Right cardiac atrium (tissue), 5 donors: ENCODE measurements at regions of chr18 and their contacts with region 1.

Region 1: GRCh38 chr18:53698907-53699306 is 525.6 kb downstream of the MBD2 start:
- DNase-seq: peak in 1 of 3 donors; percentile 25
- ATAC-seq: peak; percentile 45 to 60
- H3K4me3 ChIP-seq: no peak overlapping the region
- H3K27ac ChIP-seq: no peak overlapping the region
- H3K4me1 ChIP-seq: no peaks in the 10 kb centered on the region
- H3K27me3 ChIP-seq: no peaks in the 10 kb centered on the region

Region 2: GRCh38 chr18:53457068-53457467 is 241.8 kb before region 1 on chr18:
- intact Hi-C with region 1: no loop called
- DNase-seq: no peak
- ATAC-seq: peak in 1 of 2 donors; percentile 57
- H3K4me3 ChIP-seq: no peak overlapping the region
- H3K27ac ChIP-seq: no peak overlapping the region
- H3K4me1 ChIP-seq: peaks cover 5% of the 10 kb centered on the region
- H3K27me3 ChIP-seq: no peaks in the 10 kb centered on the region

Region 3: GRCh38 chr18:53764086-53764485 is 65.2 kb after region 1 on chr18:
- intact Hi-C with region 1: no loop called
- DNase-seq: no peak
- ATAC-seq: no peak
- H3K4me3 ChIP-seq: no peak overlapping the region
- H3K27ac ChIP-seq: no peak overlapping the region
- H3K4me1 ChIP-seq: no peaks in the 10 kb centered on the region
- H3K27me3 ChIP-seq: no peaks in the 10 kb centered on the region

Region 4: DNA sequence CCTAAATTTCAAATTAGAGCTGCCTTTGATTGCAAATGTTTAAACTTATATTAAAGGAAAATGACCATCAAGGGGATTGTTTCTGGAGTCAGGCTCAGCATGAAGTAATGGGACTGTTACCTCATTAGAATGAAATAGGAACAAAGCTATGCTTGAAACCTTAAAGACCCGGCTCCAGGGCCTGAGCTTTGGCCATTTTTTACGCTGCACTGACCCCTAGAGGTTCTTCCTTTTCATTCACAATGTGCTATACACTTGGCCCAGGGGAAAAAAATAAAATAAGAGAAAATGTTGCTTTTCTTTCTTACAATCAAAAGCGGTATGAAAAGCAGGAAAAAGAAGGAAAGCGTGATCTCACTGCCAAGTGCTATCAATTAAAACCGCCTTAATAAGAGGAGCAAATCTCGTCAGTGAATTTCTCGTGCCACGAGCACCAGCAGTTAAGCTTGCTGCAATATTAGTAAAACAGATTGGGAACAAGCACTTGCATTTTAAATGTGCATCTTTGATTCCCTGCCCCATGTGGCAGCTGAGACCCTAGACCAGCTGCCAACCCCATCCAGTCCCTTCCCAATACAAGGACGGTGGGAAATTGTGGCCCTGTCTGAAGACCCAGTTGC is 429.0 kb after region 1 on chr18:
- intact Hi-C with region 1: loop called in 2 of 4 experiments (anchors 5 kb)
- DNase-seq: no peak
- ATAC-seq: peak; percentile 64 to 78
- H3K4me3 ChIP-seq: no peak overlapping the region
- H3K27ac ChIP-seq: no peak overlapping the region
- H3K4me1 ChIP-seq: no peaks in the 10 kb centered on the region
- H3K27me3 ChIP-seq: no peaks in the 10 kb centered on the region